ENCODE measurements at regions of chr19 and their contacts with region 1.

Region 1: DNA sequence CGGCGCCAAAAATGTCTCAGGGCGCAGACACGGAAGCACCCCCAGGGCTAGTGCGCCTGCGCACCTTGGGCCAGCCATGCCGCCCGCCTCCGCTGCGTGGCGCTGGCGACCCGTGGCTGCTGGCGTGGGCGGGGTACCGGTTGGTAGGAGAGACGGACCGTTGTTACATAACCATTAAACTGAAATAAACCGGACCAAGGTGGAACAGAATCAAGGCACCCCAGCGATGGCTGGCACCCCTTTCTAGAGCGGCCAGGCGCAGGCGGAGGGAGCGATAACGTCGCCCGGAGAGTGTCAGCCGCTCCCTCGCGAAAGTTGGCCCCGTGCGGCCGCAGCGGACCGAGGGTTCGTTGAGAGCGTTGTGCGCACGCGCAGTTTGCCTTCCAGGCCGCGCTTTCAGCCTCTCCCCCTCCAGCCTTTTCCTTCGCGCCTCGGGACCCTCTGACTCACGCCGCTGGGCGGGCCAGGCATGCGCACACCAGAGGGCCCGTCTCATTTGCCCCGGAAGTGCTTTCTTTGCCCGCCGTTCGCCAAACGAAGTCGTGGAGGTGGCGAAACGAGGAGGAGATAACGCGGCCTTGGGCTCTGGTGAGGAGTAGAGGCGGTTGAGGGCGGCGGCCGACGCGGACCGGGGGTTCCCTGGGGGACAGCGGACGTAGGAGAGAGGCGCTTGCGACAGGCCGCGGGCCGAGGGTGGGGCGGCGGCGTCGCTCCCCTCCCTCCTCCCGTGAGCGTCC is at the starts of genes PLEKHJ1 and SF3A2:
- DNase-seq: peak; percentile 97
- H3K4me3 Mint-ChIP-seq: peak within 1 kb of the TSS; percentile 97
- H3K27ac Mint-ChIP-seq: peak within 1 kb of the TSS; percentile 96
- H3K4me1 Mint-ChIP-seq: peaks cover 56% of the 10 kb centered on the region
- H3K27me3 Mint-ChIP-seq: peaks cover 4% of the 10 kb centered on the region
- total RNA-seq, gene PLEKHJ1: 67.5 and 68.2 TPM in 2 replicates
- total RNA-seq, gene SF3A2: 153 and 169 TPM in 2 replicates

Region 2: DNA sequence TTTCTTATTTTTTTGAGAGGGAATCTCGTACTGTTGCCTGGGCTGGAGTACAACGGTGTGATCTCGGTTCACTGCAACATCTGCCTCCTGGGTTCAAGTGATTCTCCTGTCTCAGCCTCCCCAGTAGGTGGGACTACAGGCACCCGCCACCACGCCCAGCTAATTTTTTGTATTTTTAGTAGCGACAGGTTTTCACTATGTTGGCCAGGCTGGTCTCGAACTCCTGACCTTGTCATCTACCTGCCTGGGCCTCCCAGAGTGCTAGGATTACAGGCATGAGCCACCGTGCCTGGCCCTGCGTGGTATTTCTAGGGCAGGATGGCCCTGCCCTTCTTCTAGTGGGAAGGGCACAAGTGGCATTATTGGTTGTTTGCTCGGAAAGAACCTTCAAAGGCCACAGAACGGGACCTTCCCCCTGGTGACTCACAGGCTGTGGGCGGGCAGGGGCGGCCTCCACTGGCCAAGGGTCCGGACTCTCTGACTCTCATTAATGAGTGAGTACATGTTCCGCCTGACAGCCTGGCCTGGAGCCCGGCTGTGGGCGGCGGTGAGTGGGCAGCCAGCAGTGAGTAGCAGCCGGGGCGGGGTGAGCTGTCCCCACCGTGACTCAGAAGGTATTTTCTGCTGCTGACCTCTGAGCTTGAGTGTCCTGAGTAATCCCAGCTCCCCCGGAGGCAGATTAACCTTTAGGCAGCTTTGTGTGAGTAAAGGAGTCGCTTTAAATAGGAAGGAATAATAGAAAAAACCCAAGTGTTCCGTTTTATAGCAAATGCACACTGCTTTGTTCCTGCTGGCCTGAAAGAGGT is 67.7 kb before region 1 on chr19:
- intact Hi-C with region 1: loop called (anchors 1 kb)
- DNase-seq: peak; percentile 37
- H3K4me3 Mint-ChIP-seq: peak overlapping the region; percentile 81
- H3K27ac Mint-ChIP-seq: peak overlapping the region; percentile 87
- H3K4me1 Mint-ChIP-seq: peaks cover 53% of the 10 kb centered on the region
- H3K27me3 Mint-ChIP-seq: peaks cover 1% of the 10 kb centered on the region

Region 3: DNA sequence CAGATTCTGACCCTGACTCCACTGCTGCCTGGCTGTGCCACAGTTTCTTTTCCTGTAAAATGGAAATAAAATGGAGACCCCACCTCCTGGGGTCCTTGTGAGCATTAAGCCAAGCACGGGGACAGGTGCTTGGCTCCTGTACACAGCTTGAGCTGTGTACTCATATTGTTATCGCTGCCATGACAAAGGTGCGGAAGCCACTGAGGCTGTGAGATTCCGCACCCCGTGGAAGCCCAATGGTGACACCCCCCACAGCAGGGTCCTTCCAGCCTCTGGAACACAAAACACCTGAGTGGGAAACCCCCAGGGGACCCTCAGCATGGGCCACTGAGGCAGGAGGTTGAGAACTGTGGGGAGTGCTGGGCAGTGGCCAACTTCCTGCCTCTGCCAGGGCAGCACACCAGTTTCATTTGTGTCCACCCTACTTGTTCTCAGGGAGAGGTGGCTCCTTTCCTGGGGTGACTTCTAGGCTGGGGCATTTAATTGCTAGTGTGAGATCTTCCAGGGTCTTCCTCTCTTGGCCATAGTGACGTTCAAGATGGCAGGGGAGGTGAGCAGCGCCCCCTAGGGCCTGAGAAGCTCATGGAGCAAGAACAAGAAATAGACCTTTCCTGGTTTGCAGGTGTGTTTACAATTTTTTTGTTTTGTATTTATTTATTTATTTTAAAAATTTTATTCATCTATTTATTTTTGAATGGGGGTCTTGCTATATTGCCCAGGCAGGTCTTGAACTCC is 25.1 kb after region 1 on chr19:
- intact Hi-C with region 1: loop called (anchors 1 kb)
- DNase-seq: no peak
- H3K4me3 Mint-ChIP-seq: no peak overlapping the region
- H3K27ac Mint-ChIP-seq: no peak overlapping the region
- H3K4me1 Mint-ChIP-seq: peaks cover 20% of the 10 kb centered on the region
- H3K27me3 Mint-ChIP-seq: no peaks in the 10 kb centered on the region

Region 4: DNA sequence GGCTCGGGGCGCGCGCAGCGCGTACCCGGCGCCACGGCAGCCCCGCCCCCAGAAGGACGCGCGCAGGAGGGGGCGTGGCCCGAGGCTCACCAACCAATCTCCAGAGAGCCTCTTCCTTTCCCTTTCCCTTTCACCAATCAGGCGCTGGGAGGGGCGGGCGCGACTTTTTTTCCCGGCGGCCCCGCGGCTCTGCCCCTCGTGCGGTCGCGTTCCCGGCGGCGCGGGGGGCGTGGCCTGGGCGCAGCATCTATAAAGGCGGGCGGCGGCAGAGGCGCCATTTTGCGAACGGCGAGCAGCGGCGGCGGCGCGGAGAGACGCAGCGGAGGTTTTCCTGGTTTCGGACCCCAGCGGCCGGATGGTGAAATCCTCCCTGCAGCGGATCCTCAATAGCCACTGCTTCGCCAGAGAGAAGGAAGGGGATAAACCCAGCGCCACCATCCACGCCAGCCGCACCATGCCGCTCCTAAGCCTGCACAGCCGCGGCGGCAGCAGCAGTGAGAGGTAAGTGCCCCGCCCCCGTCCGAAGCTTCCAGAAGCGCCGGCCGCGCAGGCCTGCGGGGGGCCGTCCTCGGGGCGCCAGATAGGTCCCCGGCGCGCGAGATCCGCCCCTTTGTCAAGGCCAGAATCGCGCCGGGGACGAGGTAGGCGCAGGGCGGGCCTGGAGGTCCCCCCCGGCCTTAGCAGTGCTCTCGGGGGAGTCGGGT is 32.9 kb after region 1 on chr19:
- intact Hi-C with region 1: loop called (anchors 1 kb)
- DNase-seq: peak; percentile 99
- H3K4me3 Mint-ChIP-seq: peak overlapping the region; percentile 91
- H3K27ac Mint-ChIP-seq: peak overlapping the region; percentile 88
- H3K4me1 Mint-ChIP-seq: peaks cover 23% of the 10 kb centered on the region
- H3K27me3 Mint-ChIP-seq: peaks cover 5% of the 10 kb centered on the region

Region 5: GRCh38 chr19:2328401-2329148 is 92.1 kb after region 1 on chr19 and contains the starts of genes LSM7 and SPPL2B:
- intact Hi-C with region 1: loop called (anchors 2 kb)
- DNase-seq: peak; percentile 91
- H3K4me3 Mint-ChIP-seq: peak within 1 kb of the TSS; percentile 100
- H3K27ac Mint-ChIP-seq: peak within 1 kb of the TSS; percentile 100
- H3K4me1 Mint-ChIP-seq: peaks cover 63% of the 10 kb centered on the region
- H3K27me3 Mint-ChIP-seq: no peaks in the 10 kb centered on the region
- total RNA-seq, gene LSM7: 180 and 193 TPM in 2 replicates
- total RNA-seq, gene SPPL2B: 71.2 and 71.4 TPM in 2 replicates

Region 6: GRCh38 chr19:2371656-2372055 is 135.2 kb after region 1 on chr19:
- intact Hi-C with region 1: no loop called
- DNase-seq: no peak
- H3K4me3 Mint-ChIP-seq: no peak overlapping the region
- H3K27ac Mint-ChIP-seq: no peak overlapping the region
- H3K4me1 Mint-ChIP-seq: no peaks in the 10 kb centered on the region
- H3K27me3 Mint-ChIP-seq: peaks cover 4% of the 10 kb centered on the region

Region 7: GRCh38 chr19:2391118-2391725 is 154.7 kb after region 1 on chr19:
- intact Hi-C with region 1: loop called (anchors 1 kb)
- DNase-seq: peak; percentile 29
- H3K4me3 Mint-ChIP-seq: no peak overlapping the region
- H3K27ac Mint-ChIP-seq: no peak overlapping the region
- H3K4me1 Mint-ChIP-seq: peaks cover 5% of the 10 kb centered on the region
- H3K27me3 Mint-ChIP-seq: peaks cover 2% of the 10 kb centered on the region

Measured in activated T-helper 1 cell treated with anti-CD3 and anti-CD28 coated beads, Interleukin-12 subunit alpha, Interleukin-12 subunit beta, Interleukin-2, Interleukin-4 antibody, amounts not matched to agents 30 ng/mL and 10 ng/mL and 1 ng/mL, durations not matched to agents 14 hours and 24 hours and 36 hours (primary cell).